SK-N-SH (cell line): ENCODE measurements at regions of chr5 and their contacts with region 1.

Region 1: DNA sequence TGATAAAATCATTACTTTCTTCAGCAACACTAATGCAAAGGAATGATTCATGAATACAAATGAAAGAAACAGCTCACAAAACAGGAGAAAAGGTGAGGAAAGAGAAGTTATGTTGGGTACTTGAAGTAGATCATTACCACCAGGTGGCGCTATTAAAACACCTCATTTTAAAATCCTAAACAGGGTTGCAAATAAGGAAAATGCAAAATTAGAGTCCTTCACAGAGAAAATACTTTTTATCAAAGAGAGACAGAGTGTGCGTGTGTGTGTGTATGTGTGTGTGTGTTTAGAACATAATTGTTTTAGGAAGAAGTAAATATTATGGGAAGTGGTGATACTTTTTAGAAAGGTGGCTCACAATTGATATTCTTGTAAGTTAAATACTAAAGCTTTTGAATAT is 49.5 kb upstream of the CD180 start:
- DNase-seq: peak; percentile 34
- H3K4me3 ChIP-seq: no peak overlapping the region
- H3K27ac ChIP-seq: no peak overlapping the region
- H3K4me1 ChIP-seq: peaks cover 13 to 54% of the 10 kb centered on the region in 2 experiments
- H3K27me3 ChIP-seq: no peaks in the 10 kb centered on the region
- CTCF ChIP-seq: peak; percentile 84
- EP300 ChIP-seq: no peak
- RAD21 ChIP-seq: peak; percentile 93

Region 2: DNA sequence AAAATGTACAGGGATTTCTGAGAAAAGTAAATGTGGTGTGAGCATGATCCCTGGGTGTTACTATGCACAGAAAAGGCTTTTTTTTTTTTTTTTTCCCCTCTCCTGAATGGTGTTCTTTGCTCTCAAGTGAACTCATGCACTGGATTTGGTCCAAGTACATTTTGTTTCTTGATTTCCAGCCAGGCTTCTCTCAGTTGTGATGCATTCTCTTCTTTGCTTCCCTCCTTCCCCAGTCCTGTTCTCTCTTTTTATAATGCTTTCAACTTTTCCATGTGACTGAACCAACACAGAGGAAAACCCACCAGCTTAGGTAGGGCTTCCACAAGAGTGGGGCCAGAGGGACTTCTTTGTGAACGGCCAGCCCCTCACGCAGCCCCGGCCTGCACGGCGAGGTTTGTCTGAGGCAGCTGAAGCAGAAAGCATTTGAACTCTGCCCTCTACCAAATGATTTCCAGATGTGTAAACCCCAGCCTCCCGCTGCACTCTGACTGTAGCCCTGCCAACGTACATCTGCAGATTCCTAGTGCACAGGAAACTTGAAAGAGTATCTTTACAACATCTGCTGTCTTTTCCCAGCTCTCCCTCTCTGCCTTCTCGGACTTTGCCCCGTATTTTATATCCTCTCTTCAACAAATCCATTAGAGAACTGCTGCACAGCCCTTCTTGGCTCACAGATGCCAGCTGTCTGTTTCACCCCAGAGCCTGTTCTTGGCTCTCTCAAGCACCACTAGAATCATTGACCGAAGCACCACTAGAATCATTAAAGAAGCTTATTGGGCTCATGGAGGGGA is 22.3 kb after region 1 on chr5:
- CTCF ChIA-PET with region 1: interaction called, 14 read pairs
- POLR2A ChIA-PET with region 1: no interaction called
- DNase-seq: peak; percentile 72
- H3K4me3 ChIP-seq: peak overlapping the region; percentile 28 to 36; a peak in 3 of 4 replicates
- H3K27ac ChIP-seq: peak overlapping the region; percentile 82 to 100
- H3K4me1 ChIP-seq: peaks cover 26 to 39% of the 10 kb centered on the region in 2 experiments
- H3K27me3 ChIP-seq: no peaks in the 10 kb centered on the region
- CTCF ChIP-seq: no peak
- EP300 ChIP-seq: peak; percentile 75
- RAD21 ChIP-seq: peak; percentile 36; the same call in 1 of the 2 replicates

Region 3: DNA sequence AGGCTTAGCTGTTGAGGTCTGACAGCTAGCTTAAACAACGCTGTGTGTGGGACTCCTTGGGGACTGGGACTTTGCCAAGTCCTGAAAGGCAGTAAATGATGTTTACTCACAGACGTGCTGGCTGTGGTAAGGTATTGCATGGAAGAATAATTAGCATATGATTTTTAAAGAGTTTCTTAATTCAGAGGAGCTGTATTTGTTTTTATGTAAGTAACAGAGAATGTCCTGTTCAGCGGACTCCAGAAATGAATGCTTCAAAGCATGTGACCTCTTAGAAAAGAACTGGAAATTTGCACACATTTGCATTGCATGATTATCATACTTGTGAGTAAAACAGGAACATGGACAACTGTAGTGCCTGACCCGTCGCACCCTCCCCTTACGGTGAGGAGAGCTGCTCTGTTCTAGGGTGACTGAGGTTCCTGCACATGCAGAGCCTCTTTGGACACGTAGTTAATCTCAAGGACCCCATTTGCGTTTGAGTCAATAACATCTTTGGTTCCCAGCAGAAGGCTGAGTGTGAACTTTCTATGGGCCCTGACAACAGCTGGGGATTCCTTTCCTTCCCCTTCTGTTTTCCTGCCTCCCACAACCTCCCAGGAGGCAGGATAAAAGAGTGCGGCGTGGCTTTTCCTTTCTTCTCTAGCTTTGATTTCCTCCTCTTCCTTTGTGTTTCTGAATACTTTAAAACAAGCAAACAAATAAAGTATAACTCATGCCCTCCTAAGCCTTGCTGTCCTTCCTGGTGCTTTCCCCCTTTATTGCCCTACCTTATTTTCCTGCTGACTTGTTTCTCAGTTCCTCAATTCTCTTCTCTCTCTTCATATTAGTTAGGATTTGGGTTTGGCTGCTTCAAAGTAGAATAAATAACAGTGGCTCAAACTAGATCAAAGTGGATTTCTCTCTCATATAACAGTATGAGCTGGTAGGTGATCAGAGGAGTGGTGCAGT is 107.7 kb after region 1 on chr5:
- CTCF ChIA-PET with region 1: interaction called, 13 read pairs
- POLR2A ChIA-PET with region 1: interaction called, 3 read pairs
- DNase-seq: no peak
- H3K4me3 ChIP-seq: no peak overlapping the region
- H3K27ac ChIP-seq: no peak overlapping the region
- H3K4me1 ChIP-seq: peaks cover 0 to 33% of the 10 kb centered on the region in 2 experiments; a peak in 2 of 4 replicates
- H3K27me3 ChIP-seq: no peaks in the 10 kb centered on the region
- CTCF ChIP-seq: no peak
- EP300 ChIP-seq: no peak
- RAD21 ChIP-seq: no peak

Region 4: GRCh38 chr5:68252673-68253623 is 1006.8 kb after region 1 on chr5:
- CTCF ChIA-PET with region 1: interaction called, 80 read pairs
- POLR2A ChIA-PET with region 1: no interaction called
- DNase-seq: peak; percentile 67
- H3K4me3 ChIP-seq: no peak overlapping the region
- H3K27ac ChIP-seq: peak overlapping the region; percentile 14 to 89; a peak in 3 of 4 replicates
- H3K4me1 ChIP-seq: peaks cover 45 to 59% of the 10 kb centered on the region in 2 experiments; a peak in 3 of 4 replicates
- H3K27me3 ChIP-seq: no peaks in the 10 kb centered on the region
- CTCF ChIP-seq: peak; percentile 88
- EP300 ChIP-seq: no peak
- RAD21 ChIP-seq: peak; percentile 96

Region 5: DNA sequence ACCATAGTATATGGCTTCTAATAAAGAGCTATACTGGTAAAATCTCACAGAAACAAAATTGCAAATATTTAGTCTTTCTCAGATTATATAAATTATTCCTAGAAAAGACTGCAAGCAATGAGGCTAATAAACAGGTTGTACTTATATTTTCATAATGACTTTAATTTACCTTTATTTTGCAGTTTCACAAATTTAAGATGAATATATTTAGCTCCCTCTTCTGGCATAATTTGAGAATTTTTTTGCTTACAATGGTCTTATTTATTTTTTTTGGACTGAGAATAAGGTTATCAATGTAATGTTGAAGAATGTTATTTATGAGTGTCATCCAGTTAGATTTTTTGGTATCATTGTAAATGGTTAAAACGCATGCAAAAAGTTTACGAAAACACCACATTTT is 1026.2 kb after region 1 on chr5:
- CTCF ChIA-PET with region 1: interaction called, 22 read pairs
- POLR2A ChIA-PET with region 1: no interaction called
- DNase-seq: no peak
- H3K4me3 ChIP-seq: no peak overlapping the region; a peak in 1 of 4 replicates
- H3K27ac ChIP-seq: no peak overlapping the region; a peak in 2 of 4 replicates
- H3K4me1 ChIP-seq: peaks cover 19 to 25% of the 10 kb centered on the region in 2 experiments; a peak in 3 of 4 replicates
- H3K27me3 ChIP-seq: no peaks in the 10 kb centered on the region
- CTCF ChIP-seq: peak; percentile 70
- EP300 ChIP-seq: no peak
- RAD21 ChIP-seq: peak; percentile 52